CD8-positive, alpha-beta memory T cell (primary cell): ENCODE measurements at regions of chr6 and their contacts with region 1.

Region 1: GRCh38 chr6:142474531-142475289 is 172.9 kb downstream of the ADGRG6 start:
- DNase-seq: peak in 2 of 5 donors; percentile 10 to 37
- H3K4me3 ChIP-seq: no peak overlapping the region
- H3K4me3 Mint-ChIP-seq: no peak overlapping the region
- H3K27ac ChIP-seq: no peak overlapping the region
- H3K27ac Mint-ChIP-seq: no peak overlapping the region
- H3K4me1 ChIP-seq: no peaks in the 10 kb centered on the region
- H3K4me1 Mint-ChIP-seq: peaks cover 0 to 5% (median 5%) of the 10 kb centered on the region in 3 donors
- H3K27me3 ChIP-seq: no peaks in the 10 kb centered on the region
- H3K27me3 Mint-ChIP-seq: peaks cover 2 to 9% of the 10 kb centered on the region in 2 donors

Region 2: GRCh38 chr6:142485256-142485655 is 10.5 kb after region 1 on chr6:
- CTCF ChIA-PET with region 1: interaction called, 13 read pairs
- POLR2A ChIA-PET with region 1: no interaction called
- DNase-seq: no peak
- H3K4me3 ChIP-seq: no peak overlapping the region
- H3K4me3 Mint-ChIP-seq: no peak overlapping the region
- H3K27ac ChIP-seq: no peak overlapping the region
- H3K27ac Mint-ChIP-seq: no peak overlapping the region
- H3K4me1 ChIP-seq: no peaks in the 10 kb centered on the region
- H3K4me1 Mint-ChIP-seq: no peaks in the 10 kb centered on the region
- H3K27me3 ChIP-seq: no peaks in the 10 kb centered on the region
- H3K27me3 Mint-ChIP-seq: peaks cover 5 to 23% of the 10 kb centered on the region in 2 donors

Region 3: GRCh38 chr6:142946181-142946923 is 471.6 kb after region 1 on chr6:
- CTCF ChIA-PET with region 1: no interaction called
- POLR2A ChIA-PET with region 1: no interaction called
- DNase-seq: peak; percentile 91 to 95 (median 93)
- H3K4me3 ChIP-seq: peak overlapping the region; percentile 89
- H3K4me3 Mint-ChIP-seq: peak overlapping the region; percentile 94 to 100 (median 96)
- H3K27ac ChIP-seq: peak overlapping the region; percentile 98
- H3K27ac Mint-ChIP-seq: peak overlapping the region; percentile 98 to 100 (median 99)
- H3K4me1 ChIP-seq: peaks cover 34% of the 10 kb centered on the region
- H3K4me1 Mint-ChIP-seq: peaks cover 36 to 39% (median 38%) of the 10 kb centered on the region in 3 donors
- H3K27me3 ChIP-seq: no peaks in the 10 kb centered on the region
- H3K27me3 Mint-ChIP-seq: peaks cover 0 to 4% of the 10 kb centered on the region in 2 donors